Psoas muscle (tissue), 8 donors: ENCODE measurements at regions of chr7 and their contacts with region 1.

Region 1: DNA sequence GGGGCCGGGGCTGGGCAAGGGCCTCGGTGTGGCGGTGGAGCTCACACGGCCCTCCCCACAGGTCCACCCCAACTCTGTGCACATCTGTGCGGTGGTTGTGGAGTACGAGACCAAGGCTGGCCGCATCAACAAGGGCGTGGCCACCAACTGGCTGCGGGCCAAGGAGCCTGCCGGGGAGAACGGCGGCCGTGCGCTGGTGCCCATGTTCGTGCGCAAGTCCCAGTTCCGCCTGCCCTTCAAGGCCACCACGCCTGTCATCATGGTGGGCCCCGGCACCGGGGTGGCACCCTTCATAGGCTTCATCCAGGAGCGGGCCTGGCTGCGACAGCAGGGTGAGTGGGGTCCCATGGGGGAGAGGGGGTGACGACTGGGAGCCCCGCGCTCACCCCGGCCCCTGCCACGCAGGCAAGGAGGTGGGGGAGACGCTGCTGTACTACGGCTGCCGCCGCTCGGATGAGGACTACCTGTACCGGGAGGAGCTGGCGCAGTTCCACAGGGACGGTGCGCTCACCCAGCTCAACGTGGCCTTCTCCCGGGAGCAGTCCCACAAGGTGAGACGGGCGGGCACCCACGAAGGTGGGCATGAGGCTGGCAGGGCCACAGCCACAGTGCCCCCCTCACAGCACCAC is 8.8 kb downstream of the TMEM120A start:
- DNase-seq: peak; percentile 63 to 75
- ATAC-seq: no peak
- H3K4me3 ChIP-seq: no peak overlapping the region
- H3K27ac ChIP-seq: peak overlapping the region; percentile 23
- H3K4me1 ChIP-seq: peaks cover 12% of the 10 kb centered on the region
- H3K27me3 ChIP-seq: no peaks in the 10 kb centered on the region
- CTCF ChIP-seq: no peak

Region 2: GRCh38 chr7:75738987-75739795 is 246.4 kb before region 1 on chr7:
- intact Hi-C with region 1: no loop called
- DNase-seq: peak; percentile 100
- ATAC-seq: peak; percentile 98 to 99 (median 99)
- H3K4me3 ChIP-seq: peak overlapping the region; percentile 84
- H3K27ac ChIP-seq: peak overlapping the region; percentile 59
- H3K4me1 ChIP-seq: peaks cover 4% of the 10 kb centered on the region
- H3K27me3 ChIP-seq: no peaks in the 10 kb centered on the region
- CTCF ChIP-seq: no peak

Region 3: DNA sequence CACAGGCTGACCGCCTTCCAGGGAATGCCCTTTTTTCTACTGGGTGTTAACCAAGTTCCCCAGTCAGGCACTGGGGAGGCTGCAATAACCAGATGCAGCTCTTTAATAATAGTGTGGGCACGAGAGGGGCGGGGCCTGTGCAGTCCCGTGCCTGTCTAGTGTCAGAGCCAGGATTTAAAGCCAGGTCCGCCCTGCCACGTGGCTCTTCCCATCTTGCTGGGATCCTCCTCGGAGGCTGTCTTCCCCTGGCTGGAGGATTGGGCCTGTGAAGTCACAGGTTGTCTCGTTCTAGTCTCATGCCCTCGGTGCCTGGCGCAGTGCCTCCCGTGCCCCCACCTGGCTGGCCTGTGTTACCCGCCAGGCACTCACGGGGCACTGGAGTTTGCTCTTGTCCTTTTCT is 16.4 kb before region 1 on chr7:
- intact Hi-C with region 1: loop called in 1 of 2 experiments (anchors 2 kb)
- DNase-seq: peak; percentile 75 to 87
- ATAC-seq: peak; percentile 23 to 66 (median 56)
- H3K4me3 ChIP-seq: peak overlapping the region; percentile 25
- H3K27ac ChIP-seq: peak overlapping the region; percentile 98
- H3K4me1 ChIP-seq: peaks cover 85% of the 10 kb centered on the region
- H3K27me3 ChIP-seq: no peaks in the 10 kb centered on the region
- CTCF ChIP-seq: no peak

Region 4: GRCh38 chr7:76302347-76303201 is 316.9 kb after region 1 on chr7 and contains the start of gene HSPB1:
- intact Hi-C with region 1: no loop called
- DNase-seq: peak; percentile 96 to 98
- ATAC-seq: peak; percentile 62 to 72 (median 66)
- H3K4me3 ChIP-seq: peak within 1 kb of the TSS; percentile 96
- H3K27ac ChIP-seq: peak within 1 kb of the TSS; percentile 98
- H3K4me1 ChIP-seq: peaks cover 43% of the 10 kb centered on the region
- H3K27me3 ChIP-seq: no peaks in the 10 kb centered on the region
- CTCF ChIP-seq: no peak
- total RNA-seq, gene HSPB1: 2,972 to 5,803 (median 5,243) TPM